Dendritic cell treated with granulocyte-macrophage colony-stimulating factor and Interleukin-4, amounts not matched to agents 40 ng/mL and 50 ng/mL, for 4 days (primary cell): ENCODE measurements at regions of chr17 and their contacts with region 1.

Region 1: DNA sequence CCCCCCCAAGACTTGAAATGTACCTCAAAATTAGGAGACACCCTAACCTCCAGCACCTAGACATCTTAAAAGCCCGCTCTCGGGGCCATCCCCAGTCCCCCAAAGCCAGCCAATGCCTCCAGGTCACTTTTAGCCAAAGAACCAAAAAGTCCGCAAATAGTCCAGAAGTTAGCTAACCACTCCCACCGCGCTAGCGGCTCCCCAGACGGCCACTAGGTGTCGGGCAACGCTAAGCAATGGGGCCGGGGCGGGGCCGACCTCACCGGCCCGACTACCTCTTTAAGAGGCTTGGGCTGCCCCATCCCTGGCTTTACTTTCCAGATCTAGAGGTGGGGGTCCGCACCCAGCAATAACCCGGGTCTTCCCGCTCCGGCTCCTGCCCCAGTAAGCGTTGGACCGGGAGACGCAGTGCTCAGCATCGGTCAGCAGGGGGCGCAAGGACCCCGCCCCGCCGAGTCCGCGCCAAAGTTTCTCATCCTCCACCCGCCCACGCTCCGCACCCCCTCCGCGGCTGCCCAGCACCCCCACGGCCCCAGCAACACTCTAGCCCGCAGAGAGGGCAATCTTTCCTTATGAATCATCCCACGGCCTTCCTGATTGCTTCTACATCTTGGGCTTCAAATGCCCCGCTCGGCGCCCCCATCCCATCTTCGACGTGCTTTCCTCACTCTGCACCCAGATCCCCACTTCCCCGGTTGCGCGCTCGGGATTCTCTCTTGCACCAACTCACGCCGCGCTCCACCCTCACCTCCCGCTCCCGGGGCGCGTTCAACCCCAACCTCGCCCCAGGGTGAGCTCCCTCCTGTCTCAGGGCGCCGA is 765 bp downstream of the COL1A1 start:
- H3K4me3 Mint-ChIP-seq: peak overlapping the region; percentile 71
- H3K27ac Mint-ChIP-seq: peak overlapping the region; percentile 24
- H3K4me1 Mint-ChIP-seq: peaks cover 19% of the 10 kb centered on the region
- H3K27me3 Mint-ChIP-seq: peaks cover 74% of the 10 kb centered on the region

Region 2: DNA sequence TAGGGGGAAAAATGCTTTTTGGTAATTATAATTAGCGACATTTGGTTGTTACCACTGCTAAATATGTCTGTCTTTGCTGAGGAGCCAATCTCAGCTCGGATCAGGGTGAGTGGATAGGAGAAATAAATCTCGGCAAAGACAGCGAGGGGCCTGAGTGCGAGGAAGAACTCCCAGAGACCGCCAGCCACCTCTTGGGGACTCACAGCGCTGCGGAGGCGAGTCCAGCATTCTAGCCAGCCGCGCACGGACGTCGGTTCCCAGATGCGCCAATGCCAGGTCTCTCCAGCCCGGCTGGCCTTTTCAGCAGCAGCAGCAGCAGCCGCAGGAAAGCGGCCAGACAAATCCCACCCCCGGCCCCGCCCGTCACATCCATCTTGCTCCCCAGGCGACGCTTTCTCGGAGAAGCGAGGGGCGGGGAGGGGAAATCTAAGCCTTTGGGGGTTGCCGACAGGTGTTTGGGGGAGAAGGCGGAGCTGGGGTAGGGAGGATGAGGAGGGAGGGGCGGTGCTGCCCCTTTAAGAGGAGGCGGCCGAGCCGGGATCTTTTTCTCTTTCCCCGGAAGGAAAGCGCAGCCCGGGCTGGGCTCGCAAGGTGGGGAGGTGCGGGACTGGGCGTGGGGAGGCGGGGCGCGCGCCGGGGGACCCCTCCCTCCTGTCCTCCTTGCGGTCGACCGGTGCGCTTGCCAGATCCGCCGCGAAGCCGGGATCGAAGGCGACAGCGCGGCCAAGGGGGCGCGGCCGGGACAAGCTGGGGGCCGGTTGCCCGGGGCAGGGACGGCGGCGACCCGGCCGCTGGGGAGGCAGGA is 145.0 kb before region 1 on chr17 and contains the start of gene ITGA3:
- intact Hi-C with region 1: no loop called
- H3K4me3 Mint-ChIP-seq: peak within 1 kb of the TSS; percentile 84
- H3K27ac Mint-ChIP-seq: peak within 1 kb of the TSS; percentile 2
- H3K4me1 Mint-ChIP-seq: peaks cover 35% of the 10 kb centered on the region
- H3K27me3 Mint-ChIP-seq: peaks cover 79% of the 10 kb centered on the region

Region 3: DNA sequence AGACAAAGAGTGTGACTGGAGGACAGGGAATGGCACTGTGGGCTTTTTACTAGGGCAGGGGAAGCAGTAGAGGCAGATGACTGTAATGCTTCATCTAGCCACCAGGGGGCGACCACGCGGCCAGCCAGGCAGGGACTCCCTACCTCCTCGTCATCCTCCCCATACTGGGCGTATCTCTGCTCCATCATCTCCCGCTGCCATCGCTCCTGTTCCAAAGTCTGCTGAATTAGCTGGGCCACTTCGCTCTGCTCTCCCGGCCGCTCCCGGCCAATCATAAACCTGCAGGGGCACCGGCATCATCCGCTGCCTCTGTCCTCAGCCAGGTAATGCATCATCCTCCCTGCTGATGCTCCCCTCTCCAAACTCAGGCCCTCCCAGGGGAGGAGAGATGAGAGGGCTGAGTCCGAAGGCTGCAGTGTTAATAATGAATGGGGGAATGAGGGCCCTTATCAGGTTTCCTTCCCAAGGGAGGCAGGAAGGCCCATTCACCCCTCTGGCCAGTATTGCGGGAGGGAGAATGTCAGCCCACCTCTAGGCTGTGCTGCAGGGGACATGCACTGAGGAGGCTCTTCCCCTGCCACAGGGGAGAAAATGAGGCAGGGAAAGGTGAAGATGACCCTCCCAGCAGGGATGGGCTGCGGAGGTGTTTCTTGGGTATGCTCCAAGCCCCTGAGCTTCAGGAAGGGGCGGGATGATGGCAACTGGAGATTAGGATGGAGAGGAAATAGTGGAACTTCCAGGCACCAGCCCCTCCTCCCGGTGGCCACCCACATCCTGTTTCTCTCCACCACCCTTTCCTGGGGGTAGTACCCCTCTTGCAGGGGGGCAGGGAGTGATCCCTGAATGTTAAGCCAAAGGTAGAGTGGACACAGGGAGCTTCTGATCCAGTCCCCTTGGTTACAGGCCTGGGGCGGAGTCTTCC is 60.5 kb before region 1 on chr17:
- intact Hi-C with region 1: loop called (anchors 1 kb)
- H3K4me3 Mint-ChIP-seq: no peak overlapping the region
- H3K27ac Mint-ChIP-seq: peak overlapping the region; percentile 48
- H3K4me1 Mint-ChIP-seq: peaks cover 81% of the 10 kb centered on the region
- H3K27me3 Mint-ChIP-seq: no peaks in the 10 kb centered on the region

Region 4: DNA sequence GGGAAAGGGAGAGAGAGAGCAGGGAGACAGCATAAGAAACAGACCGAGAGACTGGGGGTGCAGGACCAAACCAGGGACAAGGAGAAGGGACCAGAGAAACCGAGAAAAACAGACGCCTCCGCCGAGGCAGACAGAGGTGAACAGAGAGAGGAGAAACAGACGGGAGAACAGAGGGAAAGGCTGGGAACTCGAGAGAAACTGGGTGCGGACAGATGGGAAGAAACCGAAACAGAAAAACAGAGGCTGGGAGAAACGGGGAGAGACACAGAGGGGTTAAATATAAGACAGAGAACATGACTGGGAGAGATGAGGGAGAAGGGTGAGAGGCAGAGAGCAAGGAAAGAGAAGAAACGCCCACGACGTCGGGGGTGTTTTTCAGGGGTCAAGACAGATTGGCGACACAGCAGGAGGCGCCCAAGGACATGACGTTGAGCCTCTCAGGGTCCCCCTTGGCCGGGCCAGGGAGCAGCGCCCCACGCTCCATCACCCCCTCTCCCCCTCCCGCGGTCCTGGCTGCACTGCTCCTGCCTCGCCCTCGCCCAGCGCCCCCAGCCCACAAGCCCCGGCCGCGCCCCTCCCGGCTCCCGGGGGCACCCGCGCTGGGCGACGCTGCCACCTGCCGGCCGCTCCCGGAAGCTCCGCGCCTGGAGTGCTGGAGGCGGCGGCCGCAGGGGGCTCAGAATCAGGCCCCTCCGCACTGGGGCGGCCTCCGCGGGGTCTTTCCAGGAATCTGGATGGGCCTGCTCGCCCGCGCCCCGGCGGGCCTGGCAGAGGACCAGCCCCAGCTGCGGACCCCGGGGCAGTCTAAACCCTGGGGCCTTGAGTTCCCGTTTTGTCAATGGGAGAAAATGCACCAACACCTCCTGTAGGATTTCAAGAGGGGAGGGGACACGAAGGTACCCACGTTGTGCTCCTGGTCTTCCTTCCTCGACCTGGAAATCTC is 72.3 kb after region 1 on chr17:
- intact Hi-C with region 1: loop called (anchors 1 kb)
- H3K4me3 Mint-ChIP-seq: peak overlapping the region; percentile 72
- H3K27ac Mint-ChIP-seq: peak overlapping the region; percentile 35
- H3K4me1 Mint-ChIP-seq: peaks cover 27% of the 10 kb centered on the region
- H3K27me3 Mint-ChIP-seq: peaks cover 52% of the 10 kb centered on the region

Region 5: GRCh38 chr17:50297407-50297865 is 96.8 kb after region 1 on chr17:
- intact Hi-C with region 1: loop called (anchors 1 kb)
- H3K4me3 Mint-ChIP-seq: no peak overlapping the region
- H3K27ac Mint-ChIP-seq: no peak overlapping the region
- H3K4me1 Mint-ChIP-seq: peaks cover 10% of the 10 kb centered on the region
- H3K27me3 Mint-ChIP-seq: peaks cover 4% of the 10 kb centered on the region